Heart right ventricle (tissue), 16 donors: ENCODE measurements at regions of chr9 and their contacts with region 1.

Region 1: DNA sequence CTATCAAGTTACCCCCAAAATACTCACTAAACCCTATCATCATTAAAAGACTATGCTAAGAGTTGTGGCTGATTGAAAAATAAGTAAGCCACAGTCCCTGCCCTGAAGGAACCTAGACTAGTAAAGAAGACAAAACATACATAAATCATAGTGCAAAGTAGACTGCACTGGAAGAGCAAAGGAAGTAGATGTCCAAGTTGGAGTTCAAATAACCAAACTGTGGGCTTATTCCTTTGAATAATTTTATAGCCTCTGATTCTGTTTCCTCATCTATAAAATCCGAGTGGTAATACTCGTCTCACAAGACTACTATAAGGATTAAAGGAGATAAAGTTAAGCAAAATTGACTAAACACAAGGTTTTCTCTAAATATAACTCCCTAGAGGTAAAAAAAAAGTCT is 140.4 kb downstream of the TLE1 start:
- DNase-seq: no peak
- ATAC-seq: no peak
- H3K4me3 ChIP-seq: no peak overlapping the region
- H3K27ac ChIP-seq: no peak overlapping the region
- H3K4me1 ChIP-seq: peaks cover 0 to 27% (median 6%) of the 10 kb centered on the region in 9 donors
- H3K27me3 ChIP-seq: no peaks in the 10 kb centered on the region
- CTCF ChIP-seq: no peak

Region 2: GRCh38 chr9:81137976-81138568 is 410.8 kb before region 1 on chr9:
- intact Hi-C with region 1: no loop called
- DNase-seq: no peak
- ATAC-seq: no peak
- H3K4me3 ChIP-seq: no peak overlapping the region
- H3K27ac ChIP-seq: no peak overlapping the region
- H3K4me1 ChIP-seq: no peaks in the 10 kb centered on the region
- H3K27me3 ChIP-seq: no peaks in the 10 kb centered on the region
- CTCF ChIP-seq: no peak

Region 3: GRCh38 chr9:81578606-81579005 is 29.7 kb after region 1 on chr9:
- intact Hi-C with region 1: loop called in 1 of 10 experiments (anchors 1 kb)
- DNase-seq: no peak
- ATAC-seq: no peak
- H3K4me3 ChIP-seq: no peak overlapping the region
- H3K27ac ChIP-seq: no peak overlapping the region
- H3K4me1 ChIP-seq: peaks cover 0 to 6% (median 0%) of the 10 kb centered on the region in 9 donors
- H3K27me3 ChIP-seq: no peaks in the 10 kb centered on the region
- CTCF ChIP-seq: no peak

Region 4: GRCh38 chr9:81879501-81879916 is 330.6 kb after region 1 on chr9:
- intact Hi-C with region 1: no loop called
- DNase-seq: no peak
- ATAC-seq: no peak
- H3K4me3 ChIP-seq: no peak overlapping the region
- H3K27ac ChIP-seq: peak overlapping the region in 2 of 10 donors; percentile 2 to 39
- H3K4me1 ChIP-seq: peaks cover 0 to 25% (median under 1%) of the 10 kb centered on the region in 9 donors
- H3K27me3 ChIP-seq: peaks cover 0 to 5% (median 0%) of the 10 kb centered on the region in 7 donors
- CTCF ChIP-seq: no peak